A549 (cell line): ENCODE measurements at regions of chr7 and their contacts with region 1.

Region 1: GRCh38 chr7:134542195-134542771 is 6.6 kb upstream of the AKR1B15 start:
- DNase-seq: peak in 1 of 2 experiments; percentile 76
- ATAC-seq: peak; percentile 24 to 25
- H3K4me3 ChIP-seq: no peak overlapping the region
- H3K27ac ChIP-seq: peak overlapping the region; percentile 18 to 66; a peak in 5 of 6 replicates
- H3K4me1 ChIP-seq: peaks cover 86% of the 10 kb centered on the region
- CTCF ChIP-seq: no peak
- EP300 ChIP-seq: no peak
- POLR2A ChIP-seq: no peak
- RAD21 ChIP-seq: no peak

Region 2: DNA sequence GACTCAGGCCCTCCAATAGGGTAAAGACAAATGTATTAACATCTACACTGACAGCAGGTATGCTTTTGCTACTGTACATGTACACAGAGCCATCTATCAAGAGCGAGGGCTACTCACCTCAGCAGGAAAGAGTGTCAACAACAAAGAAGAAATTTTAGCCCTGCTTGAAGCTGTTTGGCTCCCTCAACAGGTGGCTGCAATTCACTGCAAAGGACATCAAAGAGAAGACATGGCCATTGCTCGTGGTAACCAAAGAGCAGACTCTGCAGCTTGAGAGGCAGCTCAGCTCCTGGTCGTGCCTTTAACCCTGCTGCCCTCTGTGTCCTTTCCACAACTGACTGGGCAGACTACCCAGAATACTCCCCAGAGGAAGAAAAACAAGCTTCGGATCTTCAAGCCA is 11.7 kb after region 1 on chr7:
- CTCF ChIA-PET with region 1: interaction called, 134 read pairs
- POLR2A ChIA-PET with region 1: interaction called, 3 read pairs
- DNase-seq: peak in 1 of 2 experiments; percentile 62
- ATAC-seq: peak in 1 of 2 experiments; percentile 9; a peak in 2 of 6 replicates
- H3K4me3 ChIP-seq: no peak overlapping the region
- H3K27ac ChIP-seq: peak overlapping the region in 1 of 2 experiments; percentile 86; a peak in 4 of 6 replicates
- H3K4me1 ChIP-seq: peaks cover 13% of the 10 kb centered on the region
- CTCF ChIP-seq: peak; percentile 17; the same call in 1 of the 3 replicates
- EP300 ChIP-seq: no peak
- POLR2A ChIP-seq: no peak
- RAD21 ChIP-seq: peak; percentile 27 to 54; a peak in 2 of 5 replicates